Endothelial cell of umbilical vein (primary cell): ENCODE measurements at regions of chr10 and their contacts with region 1.

Region 1: DNA sequence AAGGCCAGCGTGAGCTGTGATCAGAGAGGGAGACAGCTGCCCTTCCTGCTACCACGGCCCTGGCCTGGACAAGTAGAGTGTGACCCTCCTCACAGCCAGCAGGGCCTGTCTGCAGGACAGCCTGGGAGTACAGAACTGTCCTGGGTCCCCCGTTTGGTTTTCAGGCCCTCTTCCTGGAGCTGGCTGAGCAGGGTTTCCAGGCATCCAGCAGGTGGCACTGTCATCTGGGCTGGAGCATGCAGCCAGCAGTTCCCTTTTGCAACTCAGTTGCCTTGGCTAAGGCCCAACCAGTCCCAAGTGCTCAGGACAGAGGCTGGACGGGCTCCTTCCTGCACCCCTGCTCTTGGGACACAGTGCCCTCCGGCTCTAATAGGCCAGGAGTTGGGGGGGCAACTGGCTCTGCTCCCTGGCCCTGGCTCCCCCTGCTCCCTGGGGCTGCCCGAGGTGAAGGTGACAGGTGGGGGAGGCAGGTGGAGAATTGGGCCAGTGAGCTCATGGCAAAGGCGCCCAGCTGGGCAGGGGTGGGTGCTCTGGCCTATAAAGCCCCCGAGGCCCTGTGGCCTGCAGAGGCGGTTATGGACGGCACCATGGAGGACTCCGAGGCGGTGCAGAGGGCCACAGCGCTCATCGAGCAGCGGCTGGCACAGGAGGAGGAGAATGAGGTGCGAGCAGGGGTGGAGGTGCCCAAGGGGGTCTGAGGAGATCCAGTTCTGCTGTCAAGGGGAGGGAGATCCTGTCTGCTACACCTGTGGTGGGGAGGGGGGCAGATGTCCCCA is at the start of gene ANKRD2:
- DNase-seq: peak; percentile 66
- H3K4me3 ChIP-seq: no peak within 1 kb of the TSS
- H3K27ac ChIP-seq: no peak within 1 kb of the TSS
- H3K4me1 ChIP-seq: peaks cover 14% of the 10 kb centered on the region
- H3K27me3 ChIP-seq: no peaks in the 10 kb centered on the region
- CTCF ChIP-seq: peak; percentile 87 to 96
- POLR2A ChIP-seq: no peak
- total RNA-seq, gene ANKRD2: 1.6 and 2.3 TPM in 2 replicates

Region 2: DNA sequence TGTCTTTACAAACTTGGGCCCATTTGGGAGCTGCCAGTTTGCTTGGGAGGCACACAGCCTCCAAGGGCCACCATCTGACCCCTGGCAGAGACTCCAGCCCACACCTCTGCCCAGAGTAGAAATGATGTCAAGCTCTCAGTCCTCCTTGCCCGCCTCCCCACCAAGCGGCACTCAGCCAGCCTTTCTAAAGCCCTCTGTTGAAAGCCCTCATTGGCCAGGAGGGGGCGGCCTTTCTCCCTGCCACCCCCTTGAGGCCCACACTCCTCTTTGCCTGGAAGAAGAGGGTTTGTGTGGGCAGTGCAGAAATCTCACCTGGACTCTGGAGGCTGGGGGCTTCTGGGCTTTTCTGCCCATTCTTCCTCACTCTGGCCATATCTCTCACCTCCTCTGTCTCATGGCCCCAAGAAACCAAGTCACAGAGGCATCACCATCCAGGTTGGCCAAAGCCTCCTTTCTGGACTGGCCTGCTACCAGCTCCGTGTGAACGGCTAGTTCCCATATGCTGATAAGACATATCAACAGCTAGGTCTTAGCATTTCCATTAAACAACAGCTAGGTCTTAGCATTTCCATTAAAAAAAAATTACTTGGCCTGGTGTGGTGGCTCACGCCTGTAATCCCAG is 37.5 kb before region 1 on chr10:
- CTCF ChIA-PET with region 1: interaction called, 25 read pairs
- POLR2A ChIA-PET with region 1: no interaction called
- dilution Hi-C with region 1: no loop called
- intact Hi-C with region 1: no loop called
- DNase-seq: peak; percentile 55
- H3K4me3 ChIP-seq: no peak overlapping the region
- H3K27ac ChIP-seq: no peak overlapping the region
- H3K4me1 ChIP-seq: peaks cover 9% of the 10 kb centered on the region
- H3K27me3 ChIP-seq: no peaks in the 10 kb centered on the region
- CTCF ChIP-seq: peak; percentile 64 to 82
- POLR2A ChIP-seq: no peak

Region 3: GRCh38 chr10:97553575-97554031 is 18.8 kb before region 1 on chr10:
- CTCF ChIA-PET with region 1: interaction called, 28 read pairs
- POLR2A ChIA-PET with region 1: no interaction called
- dilution Hi-C with region 1: no loop called
- intact Hi-C with region 1: no loop called
- DNase-seq: peak; percentile 82
- H3K4me3 ChIP-seq: no peak overlapping the region
- H3K27ac ChIP-seq: no peak overlapping the region
- H3K4me1 ChIP-seq: peaks cover 3% of the 10 kb centered on the region
- H3K27me3 ChIP-seq: no peaks in the 10 kb centered on the region
- CTCF ChIP-seq: peak; percentile 83 to 96
- POLR2A ChIP-seq: no peak

Region 4: DNA sequence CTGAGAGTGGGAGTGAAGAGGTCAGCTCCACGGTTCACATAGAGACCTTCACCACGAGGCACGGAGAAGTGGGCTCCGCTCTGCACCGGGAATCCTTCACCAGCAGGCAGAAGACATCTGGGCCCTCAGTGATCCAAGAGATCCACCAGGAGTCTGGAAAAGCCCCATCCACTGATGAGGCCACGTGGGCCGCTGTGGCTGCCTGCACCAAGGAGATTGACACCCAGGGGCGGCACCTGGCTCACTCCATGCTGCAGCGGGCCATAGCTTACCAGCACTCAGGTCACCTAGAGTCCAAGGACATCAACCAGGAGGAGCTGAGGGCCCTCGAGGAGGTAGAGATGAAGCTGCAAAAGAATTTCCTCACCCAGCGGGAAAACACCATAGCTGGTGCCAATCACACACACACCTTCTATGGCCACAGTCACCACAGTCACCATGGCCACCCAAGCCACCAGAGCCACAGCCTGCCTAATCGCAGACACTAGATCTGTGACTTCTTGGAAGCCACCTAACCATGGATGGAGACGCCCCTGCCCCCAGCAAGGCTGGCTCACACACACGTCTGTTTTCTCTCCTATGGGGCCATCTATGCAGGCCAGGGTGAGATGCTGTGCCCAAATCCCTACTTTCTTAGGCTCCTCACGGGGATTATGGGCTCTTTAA is 17.8 kb after region 1 on chr10:
- CTCF ChIA-PET with region 1: interaction called, 16 read pairs
- POLR2A ChIA-PET with region 1: no interaction called
- dilution Hi-C with region 1: no loop called
- intact Hi-C with region 1: no loop called
- DNase-seq: no peak
- H3K4me3 ChIP-seq: no peak overlapping the region
- H3K27ac ChIP-seq: no peak overlapping the region
- H3K4me1 ChIP-seq: no peaks in the 10 kb centered on the region
- H3K27me3 ChIP-seq: no peaks in the 10 kb centered on the region
- CTCF ChIP-seq: no peak
- POLR2A ChIP-seq: no peak

Region 5: DNA sequence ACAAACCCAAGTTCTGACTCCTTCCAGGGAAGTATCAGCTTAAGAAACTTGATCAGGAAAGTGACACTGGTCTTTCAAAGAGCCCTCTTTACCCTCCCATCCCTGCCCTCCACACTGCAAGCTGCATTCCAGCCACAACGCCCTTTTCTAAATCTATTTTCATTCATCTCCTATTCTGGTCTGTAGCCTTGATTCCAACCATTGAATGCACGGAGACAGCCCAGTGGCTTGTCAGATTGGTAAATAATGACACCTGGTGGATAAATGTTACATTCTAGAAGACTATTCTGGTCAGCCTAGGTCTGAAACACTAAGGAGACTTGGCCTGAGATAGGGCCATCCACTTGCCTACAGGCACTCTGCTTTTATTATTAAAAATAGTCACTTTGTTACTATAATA is 40.0 kb after region 1 on chr10:
- CTCF ChIA-PET with region 1: interaction called, 304 read pairs
- POLR2A ChIA-PET with region 1: interaction called, 3 read pairs
- dilution Hi-C with region 1: no loop called
- intact Hi-C with region 1: loop called (anchors 1 kb)
- DNase-seq: peak; percentile 71
- H3K4me3 ChIP-seq: no peak overlapping the region
- H3K27ac ChIP-seq: no peak overlapping the region
- H3K4me1 ChIP-seq: no peaks in the 10 kb centered on the region
- H3K27me3 ChIP-seq: no peaks in the 10 kb centered on the region
- CTCF ChIP-seq: peak in 1 of 2 donors; percentile 38
- POLR2A ChIP-seq: no peak

Region 6: GRCh38 chr10:97686962-97687784 is 114.8 kb after region 1 on chr10 and contains the start of gene AVPI1:
- CTCF ChIA-PET with region 1: interaction called, 5 read pairs
- POLR2A ChIA-PET with region 1: no interaction called
- dilution Hi-C with region 1: no loop called
- intact Hi-C with region 1: loop called (anchors 1 kb)
- DNase-seq: peak; percentile 98
- H3K4me3 ChIP-seq: peak within 1 kb of the TSS; percentile 41 to 62 (median 60)
- H3K27ac ChIP-seq: peak within 1 kb of the TSS; percentile 42
- H3K4me1 ChIP-seq: peaks cover 16% of the 10 kb centered on the region
- H3K27me3 ChIP-seq: no peaks in the 10 kb centered on the region
- CTCF ChIP-seq: no peak
- POLR2A ChIP-seq: peak; percentile 68
- total RNA-seq, gene AVPI1: 2.4 and 3.0 TPM in 2 replicates